ENCODE measurements at regions of chr5 and their contacts with region 1.

Region 1: DNA sequence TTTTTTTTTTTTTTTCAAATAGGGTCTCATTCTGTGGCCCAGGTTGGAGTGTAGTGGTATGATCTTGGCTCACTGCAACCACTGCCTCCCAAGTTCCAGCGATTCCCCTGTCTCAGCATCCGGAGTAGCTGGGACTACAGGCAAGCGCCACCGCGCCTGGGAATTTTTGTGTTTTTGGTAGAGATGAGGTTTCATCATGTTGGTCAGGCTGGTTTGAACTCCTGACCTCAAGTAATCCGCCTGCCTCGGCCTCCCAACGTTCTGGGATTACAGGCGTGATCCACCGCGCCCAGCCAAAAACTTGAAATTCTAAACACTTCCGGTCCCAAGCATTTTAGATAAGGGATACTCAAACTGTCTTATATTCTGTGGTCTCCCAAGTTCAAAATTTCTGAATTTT is 718.9 kb upstream of the MEF2C start:
- DNase-seq: no peak
- H3K4me3 ChIP-seq: no peak overlapping the region
- H3K27ac ChIP-seq: no peak overlapping the region
- H3K4me1 ChIP-seq: no peaks in the 10 kb centered on the region
- H3K27me3 ChIP-seq: no peaks in the 10 kb centered on the region
- CTCF ChIP-seq: no peak

Region 2: DNA sequence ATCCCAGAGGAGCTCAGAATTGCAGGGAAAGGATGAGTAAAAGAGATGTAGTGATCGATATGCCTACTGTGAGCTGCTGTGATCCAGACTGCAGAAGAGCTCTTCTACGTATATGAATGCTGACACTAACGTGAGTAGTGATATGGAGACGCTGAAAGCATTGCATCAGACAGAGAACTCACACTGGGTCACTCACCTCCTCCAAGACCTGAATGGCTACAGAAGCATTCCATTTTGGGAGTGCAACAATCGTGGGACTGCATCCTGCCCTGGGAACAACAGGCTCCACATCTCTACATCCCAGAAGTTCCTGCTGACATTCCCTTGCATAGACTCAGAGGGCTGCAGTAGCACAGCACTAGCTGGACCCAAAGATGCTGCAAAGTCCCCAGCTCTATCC is 37.0 kb after region 1 on chr5:
- CTCF ChIA-PET with region 1: interaction called, 10 read pairs
- POLR2A ChIA-PET with region 1: no interaction called
- intact Hi-C with region 1: no loop called
- DNase-seq: no peak
- H3K4me3 ChIP-seq: no peak overlapping the region
- H3K27ac ChIP-seq: no peak overlapping the region
- H3K4me1 ChIP-seq: no peaks in the 10 kb centered on the region
- H3K27me3 ChIP-seq: no peaks in the 10 kb centered on the region
- CTCF ChIP-seq: no peak